Posterior vena cava (tissue), 2 donors: ENCODE measurements at regions of chr3 and their contacts with region 1.

Region 1: GRCh38 chr3:177050501-177051237 is 146.6 kb downstream of the TBL1XR1 start:
- DNase-seq: no peak

Region 2: GRCh38 chr3:176633511-176633910 is 417.2 kb before region 1 on chr3:
- intact Hi-C with region 1: no loop called
- DNase-seq: no peak

Region 3: GRCh38 chr3:177197041-177197727 is 146.5 kb after region 1 on chr3 and contains the start of gene TBL1XR1:
- intact Hi-C with region 1: loop called in 1 of 2 experiments (anchors 10 kb)
- DNase-seq: peak; percentile 97
- total RNA-seq, gene TBL1XR1: 126 to 146 TPM

Region 4: DNA sequence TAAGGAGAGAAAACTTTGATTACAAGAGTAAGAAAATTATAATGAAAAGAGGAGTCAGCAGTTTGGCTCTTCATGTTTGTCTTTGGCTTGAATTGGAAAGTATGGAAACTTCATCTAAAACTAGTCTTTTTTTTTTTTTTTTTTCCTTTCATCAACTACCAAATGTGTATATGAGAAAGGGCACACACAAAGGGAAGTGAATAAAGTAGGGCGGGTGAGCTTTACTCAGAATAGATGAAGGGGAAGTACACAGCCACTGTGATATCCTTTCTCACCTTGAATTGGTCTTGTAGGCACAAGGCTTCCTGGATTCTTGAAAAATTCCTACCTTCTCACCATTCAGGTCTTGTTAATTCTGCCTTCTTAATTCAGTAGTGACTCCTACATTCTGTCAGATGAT is 833.3 kb after region 1 on chr3:
- intact Hi-C with region 1: no loop called
- DNase-seq: no peak